Activated CD4-positive, alpha-beta T cell treated with anti-CD3 and anti-CD28 coated beads for 36 hours (primary cell): ENCODE measurements at regions of chr20 and their contacts with region 1.

Region 1: DNA sequence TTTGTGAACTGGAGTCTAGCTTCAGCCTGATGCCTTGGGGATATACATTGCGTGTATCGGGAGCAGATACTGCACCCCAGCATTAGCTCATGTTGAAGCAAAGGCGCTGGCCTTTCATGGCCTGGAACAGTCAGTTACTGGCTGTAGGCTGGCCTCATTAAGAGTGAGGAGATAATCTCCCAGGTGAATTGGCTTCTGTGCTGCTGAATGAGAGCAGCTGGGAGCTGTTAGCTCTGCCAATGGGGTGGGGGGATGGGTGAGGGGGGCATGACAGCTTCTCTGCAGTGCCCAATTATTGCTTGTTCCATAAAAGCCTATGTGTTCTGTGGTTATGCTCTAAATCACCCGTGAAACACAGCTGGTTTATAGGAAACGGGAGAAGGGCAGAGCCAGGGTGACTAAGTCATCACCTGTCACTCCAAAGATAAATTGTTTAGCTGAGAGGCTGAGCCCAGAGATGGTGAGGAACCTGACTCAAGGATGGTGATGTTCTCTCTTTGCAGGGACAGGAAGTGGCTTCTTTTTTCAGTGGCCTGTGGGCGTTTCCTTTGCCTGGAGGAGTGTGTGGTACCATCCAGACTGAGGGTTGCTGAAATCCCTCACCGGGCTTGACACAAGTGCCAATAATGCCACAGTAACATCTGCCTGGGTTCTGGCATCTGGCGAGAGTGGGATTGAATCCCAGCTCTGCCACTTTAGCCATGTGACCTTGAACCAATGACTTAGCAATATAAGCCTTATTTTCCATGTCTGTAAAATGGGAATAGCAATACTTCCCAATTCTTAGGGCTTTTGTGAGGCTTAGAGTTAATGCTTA is 170.8 kb downstream of the BCAS1 start:
- DNase-seq: peak; percentile 89
- ATAC-seq: peak; percentile 92
- H3K4me3 Mint-ChIP-seq: peak overlapping the region; percentile 10
- H3K27ac Mint-ChIP-seq: peak overlapping the region; percentile 92
- H3K4me1 Mint-ChIP-seq: peaks cover 49% of the 10 kb centered on the region
- H3K27me3 Mint-ChIP-seq: no peaks in the 10 kb centered on the region

Region 2: DNA sequence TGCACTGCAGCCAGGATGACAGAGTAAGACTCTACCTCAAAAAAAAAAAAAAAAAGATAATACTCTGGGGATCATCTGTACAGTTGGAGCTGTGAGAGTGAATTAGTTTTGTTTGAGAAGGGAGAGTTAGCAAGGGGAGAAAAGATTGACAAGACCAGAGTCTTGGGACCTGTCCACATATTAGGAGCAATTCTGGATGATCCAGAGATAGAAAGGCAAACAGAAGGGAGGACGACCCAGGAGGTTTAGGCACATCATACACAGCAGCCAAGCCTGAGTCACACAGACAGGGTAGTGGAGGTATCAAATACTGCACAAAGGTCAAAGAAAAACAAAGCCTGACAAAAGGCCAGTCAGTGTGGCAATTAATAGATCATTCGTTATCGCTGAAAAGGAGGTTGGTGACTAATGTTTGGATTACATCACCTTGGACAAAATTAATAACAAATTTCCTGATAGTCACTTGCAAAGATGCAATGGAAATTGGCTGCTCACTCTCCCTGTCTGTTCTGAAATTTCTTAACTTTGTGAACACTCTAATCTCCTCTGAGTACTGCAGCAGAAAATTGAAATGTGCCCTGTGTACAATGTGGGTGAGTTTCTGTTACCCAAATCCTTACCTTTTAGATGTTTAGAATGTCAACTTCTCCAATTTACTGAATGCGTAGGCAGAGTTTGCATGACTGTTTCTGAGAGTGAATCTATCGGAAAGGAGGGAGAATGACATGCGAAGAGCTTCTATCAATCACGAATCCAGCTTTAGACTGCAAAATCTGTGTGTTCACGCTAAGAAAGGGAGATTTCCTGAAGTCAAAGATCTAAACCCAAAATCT is 822.0 kb before region 1 on chr20:
- CTCF ChIA-PET with region 1: no interaction called
- POLR2A ChIA-PET with region 1: no interaction called
- intact Hi-C with region 1: loop called in 1 of 2 experiments (anchors 10 kb)
- DNase-seq: peak; percentile 56
- ATAC-seq: peak; percentile 80
- H3K4me3 Mint-ChIP-seq: no peak overlapping the region
- H3K27ac Mint-ChIP-seq: no peak overlapping the region
- H3K4me1 Mint-ChIP-seq: peaks cover 44% of the 10 kb centered on the region
- H3K27me3 Mint-ChIP-seq: peaks cover 3% of the 10 kb centered on the region

Region 3: GRCh38 chr20:53883098-53883811 is 16.3 kb before region 1 on chr20:
- CTCF ChIA-PET with region 1: interaction called, 3 read pairs
- POLR2A ChIA-PET with region 1: interaction called, 3 read pairs
- intact Hi-C with region 1: loop called in 1 of 2 experiments (anchors 2 kb)
- DNase-seq: peak; percentile 30
- ATAC-seq: no peak
- H3K4me3 Mint-ChIP-seq: no peak overlapping the region
- H3K27ac Mint-ChIP-seq: no peak overlapping the region
- H3K4me1 Mint-ChIP-seq: peaks cover 50% of the 10 kb centered on the region
- H3K27me3 Mint-ChIP-seq: no peaks in the 10 kb centered on the region